ENCODE measurements at regions of chr1 and their contacts with region 1.

Region 1: GRCh38 chr1:228457396-228458176 is 29.6 kb upstream of the RNF187 start:
- DNase-seq: peak; percentile 92 to 96 (median 94)
- H3K4me3 ChIP-seq: peak overlapping the region; percentile 67 to 86
- H3K4me3 Mint-ChIP-seq: peak overlapping the region; percentile 94 to 100 (median 96)
- H3K27ac ChIP-seq: peak overlapping the region; percentile 82
- H3K27ac Mint-ChIP-seq: peak overlapping the region; percentile 99 to 100 (median 99)
- H3K4me1 ChIP-seq: peaks cover 30% of the 10 kb centered on the region
- H3K4me1 Mint-ChIP-seq: peaks cover 30 to 64% (median 45%) of the 10 kb centered on the region in 4 donors
- H3K27me3 ChIP-seq: no peaks in the 10 kb centered on the region
- H3K27me3 Mint-ChIP-seq: peaks cover 0 to 5% of the 10 kb centered on the region in 2 donors

Region 2: GRCh38 chr1:228082135-228082891 is 375.3 kb before region 1 on chr1 and contains the start of gene ARF1:
- CTCF ChIA-PET with region 1: interaction called, 4 read pairs
- POLR2A ChIA-PET with region 1: interaction called, 5 read pairs
- intact Hi-C with region 1: loop called (anchors 2 kb)
- DNase-seq: peak; percentile 88 to 97 (median 95)
- H3K4me3 ChIP-seq: peak within 1 kb of the TSS; percentile 80 to 97
- H3K4me3 Mint-ChIP-seq: peak within 1 kb of the TSS; percentile 90 to 96 (median 94)
- H3K27ac ChIP-seq: peak within 1 kb of the TSS; percentile 97
- H3K27ac Mint-ChIP-seq: peak within 1 kb of the TSS; percentile 95 to 99 (median 97)
- H3K4me1 ChIP-seq: peaks cover 53% of the 10 kb centered on the region
- H3K4me1 Mint-ChIP-seq: peaks cover 35 to 56% (median 45%) of the 10 kb centered on the region in 4 donors
- H3K27me3 ChIP-seq: no peaks in the 10 kb centered on the region
- H3K27me3 Mint-ChIP-seq: no peaks in the 10 kb centered on the region
- total RNA-seq, gene ARF1: 265 to 270 TPM

Region 3: GRCh38 chr1:228212966-228213844 is 244.4 kb before region 1 on chr1:
- CTCF ChIA-PET with region 1: no interaction called
- POLR2A ChIA-PET with region 1: interaction called, 6 read pairs
- intact Hi-C with region 1: loop called (anchors 1 kb)
- DNase-seq: peak; percentile 82 to 92 (median 84)
- H3K4me3 ChIP-seq: peak overlapping the region; percentile 52
- H3K4me3 Mint-ChIP-seq: peak overlapping the region; percentile 83 to 94 (median 89)
- H3K27ac ChIP-seq: peak overlapping the region; percentile 46
- H3K27ac Mint-ChIP-seq: peak overlapping the region; percentile 68 to 95 (median 90)
- H3K4me1 ChIP-seq: peaks cover 7% of the 10 kb centered on the region
- H3K4me1 Mint-ChIP-seq: peaks cover 3 to 17% (median 9%) of the 10 kb centered on the region in 4 donors
- H3K27me3 ChIP-seq: no peaks in the 10 kb centered on the region
- H3K27me3 Mint-ChIP-seq: no peaks in the 10 kb centered on the region

Region 4: DNA sequence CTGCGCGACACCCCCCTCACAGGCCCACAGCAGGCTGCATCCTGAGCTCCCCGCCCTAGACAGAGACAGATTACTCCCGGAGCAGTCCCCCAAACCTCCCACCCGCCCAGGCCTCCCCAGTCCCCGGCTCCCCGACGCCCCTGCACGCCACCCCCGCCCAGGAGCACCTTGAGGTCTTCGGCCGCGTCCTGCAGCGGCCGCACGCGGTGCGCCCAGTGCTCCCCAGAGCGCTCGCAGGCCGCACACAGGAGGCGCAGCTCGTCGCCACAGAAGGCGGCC is 51.7 kb before region 1 on chr1:
- CTCF ChIA-PET with region 1: interaction called, 7 read pairs
- POLR2A ChIA-PET with region 1: interaction called, 55 read pairs
- intact Hi-C with region 1: no loop called
- DNase-seq: no peak
- H3K4me3 ChIP-seq: peak overlapping the region; percentile 29 to 72
- H3K4me3 Mint-ChIP-seq: peak overlapping the region; percentile 92 to 97 (median 94)
- H3K27ac ChIP-seq: peak overlapping the region; percentile 81
- H3K27ac Mint-ChIP-seq: peak overlapping the region; percentile 47 to 92 (median 87)
- H3K4me1 ChIP-seq: peaks cover 52% of the 10 kb centered on the region
- H3K4me1 Mint-ChIP-seq: peaks cover 29 to 72% (median 50%) of the 10 kb centered on the region in 4 donors
- H3K27me3 ChIP-seq: no peaks in the 10 kb centered on the region
- H3K27me3 Mint-ChIP-seq: no peaks in the 10 kb centered on the region

Region 5: DNA sequence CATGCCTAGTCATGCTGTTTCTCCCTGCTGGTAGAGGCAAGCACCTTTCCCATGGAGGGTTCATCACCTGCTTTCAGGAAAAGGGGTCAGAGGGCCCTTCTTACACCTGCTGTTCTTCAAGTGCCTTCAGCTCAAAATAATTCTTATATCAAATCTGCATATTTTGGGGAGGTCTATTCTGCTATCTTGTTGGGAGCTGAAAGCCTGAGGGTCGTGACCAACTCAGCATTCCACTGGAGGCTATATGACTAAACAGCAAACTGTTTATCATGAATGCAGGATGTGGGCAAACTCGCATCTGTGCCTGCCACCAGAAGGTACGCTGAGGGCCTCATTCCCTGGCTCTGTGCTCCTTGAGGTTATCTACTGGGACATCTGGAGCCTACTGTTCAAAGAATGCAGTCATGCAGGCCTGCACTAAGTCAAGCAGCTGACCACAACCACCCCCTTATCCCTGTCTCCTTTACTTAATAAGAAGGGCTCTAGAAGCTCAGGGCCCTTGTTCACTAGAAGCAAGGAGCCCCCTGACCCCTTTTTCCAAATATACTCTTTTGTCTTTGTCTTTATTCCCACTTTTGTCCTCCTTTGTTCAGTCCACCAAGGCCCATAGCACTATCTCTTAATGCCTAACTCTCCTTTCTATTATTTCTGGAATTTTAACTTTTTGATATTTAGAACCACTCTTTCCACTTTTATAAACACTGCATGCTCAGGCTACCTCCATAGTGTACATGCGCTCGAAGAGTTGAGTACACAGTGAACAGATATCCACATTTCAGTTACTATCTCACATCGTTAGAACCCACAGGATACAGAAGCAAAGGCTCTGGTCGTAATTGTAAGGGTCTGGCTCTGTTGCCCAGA is 36.4 kb before region 1 on chr1:
- CTCF ChIA-PET with region 1: no interaction called
- POLR2A ChIA-PET with region 1: no interaction called
- intact Hi-C with region 1: no loop called
- DNase-seq: no peak
- H3K4me3 ChIP-seq: no peak overlapping the region
- H3K4me3 Mint-ChIP-seq: peak overlapping the region in 1 of 8 donors; percentile 58
- H3K27ac ChIP-seq: no peak overlapping the region
- H3K27ac Mint-ChIP-seq: no peak overlapping the region
- H3K4me1 ChIP-seq: peaks cover 10% of the 10 kb centered on the region
- H3K4me1 Mint-ChIP-seq: peaks cover 4 to 13% (median 9%) of the 10 kb centered on the region in 4 donors
- H3K27me3 ChIP-seq: no peaks in the 10 kb centered on the region
- H3K27me3 Mint-ChIP-seq: peaks cover 2 to 3% of the 10 kb centered on the region in 2 donors

Region 6: GRCh38 chr1:228443395-228443794 is 14.2 kb before region 1 on chr1:
- CTCF ChIA-PET with region 1: no interaction called
- POLR2A ChIA-PET with region 1: no interaction called
- intact Hi-C with region 1: no loop called
- DNase-seq: no peak
- H3K4me3 ChIP-seq: no peak overlapping the region
- H3K4me3 Mint-ChIP-seq: no peak overlapping the region
- H3K27ac ChIP-seq: no peak overlapping the region
- H3K27ac Mint-ChIP-seq: no peak overlapping the region
- H3K4me1 ChIP-seq: peaks cover 15% of the 10 kb centered on the region
- H3K4me1 Mint-ChIP-seq: peaks cover 8 to 27% (median 16%) of the 10 kb centered on the region in 4 donors
- H3K27me3 ChIP-seq: peaks cover 17% of the 10 kb centered on the region
- H3K27me3 Mint-ChIP-seq: peaks cover 42 to 53% of the 10 kb centered on the region in 2 donors

Region 7: GRCh38 chr1:228471762-228472398 is 14.3 kb after region 1 on chr1:
- CTCF ChIA-PET with region 1: interaction called, 14 read pairs
- POLR2A ChIA-PET with region 1: interaction called, 4 read pairs
- intact Hi-C with region 1: no loop called
- DNase-seq: peak in 4 of 5 donors; percentile 41 to 43 (median 42)
- H3K4me3 ChIP-seq: no peak overlapping the region
- H3K4me3 Mint-ChIP-seq: no peak overlapping the region
- H3K27ac ChIP-seq: no peak overlapping the region
- H3K27ac Mint-ChIP-seq: peak overlapping the region in 1 of 7 donors; percentile 36
- H3K4me1 ChIP-seq: peaks cover 4% of the 10 kb centered on the region
- H3K4me1 Mint-ChIP-seq: peaks cover 1 to 9% (median 3%) of the 10 kb centered on the region in 4 donors
- H3K27me3 ChIP-seq: no peaks in the 10 kb centered on the region
- H3K27me3 Mint-ChIP-seq: peaks cover 2 to 16% of the 10 kb centered on the region in 2 donors

Region 8: GRCh38 chr1:228486596-228487335 is 29.2 kb after region 1 on chr1:
- CTCF ChIA-PET with region 1: interaction called, 27 read pairs
- POLR2A ChIA-PET with region 1: interaction called, 92 read pairs
- intact Hi-C with region 1: loop called (anchors 1 kb)
- DNase-seq: peak; percentile 83 to 90 (median 87)
- H3K4me3 ChIP-seq: peak overlapping the region; percentile 89 to 100
- H3K4me3 Mint-ChIP-seq: peak overlapping the region; percentile 88 to 98 (median 94)
- H3K27ac ChIP-seq: peak overlapping the region; percentile 99
- H3K27ac Mint-ChIP-seq: peak overlapping the region; percentile 99 to 100 (median 100)
- H3K4me1 ChIP-seq: peaks cover 32% of the 10 kb centered on the region
- H3K4me1 Mint-ChIP-seq: peaks cover 11 to 44% (median 30%) of the 10 kb centered on the region in 4 donors
- H3K27me3 ChIP-seq: no peaks in the 10 kb centered on the region
- H3K27me3 Mint-ChIP-seq: no peaks in the 10 kb centered on the region

Region 9: GRCh38 chr1:228765168-228765946 is 307.8 kb after region 1 on chr1:
- CTCF ChIA-PET with region 1: no interaction called
- POLR2A ChIA-PET with region 1: no interaction called
- intact Hi-C with region 1: no loop called
- DNase-seq: peak in 4 of 5 donors; percentile 13 to 21 (median 18)
- H3K4me3 ChIP-seq: no peak overlapping the region
- H3K4me3 Mint-ChIP-seq: peak overlapping the region in 6 of 8 donors; percentile 25 to 67 (median 48)
- H3K27ac ChIP-seq: no peak overlapping the region
- H3K27ac Mint-ChIP-seq: peak overlapping the region; percentile 43 to 86 (median 76)
- H3K4me1 ChIP-seq: peaks cover 14% of the 10 kb centered on the region
- H3K4me1 Mint-ChIP-seq: peaks cover 8 to 22% (median 17%) of the 10 kb centered on the region in 4 donors
- H3K27me3 ChIP-seq: no peaks in the 10 kb centered on the region
- H3K27me3 Mint-ChIP-seq: no peaks in the 10 kb centered on the region